H1 (cell line): ENCODE measurements at regions of chr10 and their contacts with region 1.

Region 1: DNA sequence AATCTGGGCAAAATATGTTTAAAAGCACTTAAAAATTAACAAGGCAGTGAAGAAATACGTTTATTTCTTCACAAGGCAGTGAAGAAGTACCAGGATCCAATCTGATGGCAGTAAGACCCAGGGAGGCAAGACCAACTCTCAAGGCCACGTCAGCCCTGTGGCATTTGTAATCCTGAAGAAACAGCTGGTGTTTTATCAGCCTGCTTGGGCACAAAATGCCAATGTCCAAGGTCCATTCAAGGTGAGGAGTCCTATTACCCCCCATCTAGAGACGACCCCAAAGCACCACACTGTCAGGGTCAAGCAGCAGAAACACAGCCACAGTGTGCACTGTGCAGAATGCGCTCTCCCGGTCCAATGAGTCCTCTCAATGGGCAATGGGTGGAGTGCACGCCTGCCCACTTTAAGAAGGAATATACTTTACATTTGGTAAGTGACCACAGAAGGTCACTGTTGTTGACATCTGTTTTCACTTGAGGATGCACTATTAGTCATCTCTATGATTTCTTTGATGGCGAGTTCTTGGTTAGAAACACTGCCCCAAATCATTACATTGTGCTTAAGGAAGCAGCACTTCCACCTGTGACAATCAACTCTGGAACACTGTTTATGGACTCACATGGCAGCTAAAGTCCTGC is 12.8 kb downstream of the CPXM2 start:
- DNase-seq: no peak
- H3K4me3 ChIP-seq: no peak overlapping the region
- H3K27ac ChIP-seq: no peak overlapping the region
- H3K4me1 ChIP-seq: no peaks in the 10 kb centered on the region
- H3K27me3 ChIP-seq: no peaks in the 10 kb centered on the region
- CTCF ChIP-seq: no peak
- EP300 ChIP-seq: no peak
- POLR2A ChIP-seq: no peak
- RAD21 ChIP-seq: no peak

Region 2: GRCh38 chr10:123301077-123301857 is 577.5 kb before region 1 on chr10:
- CTCF ChIA-PET with region 1: no interaction called
- POLR2A ChIA-PET with region 1: no interaction called
- DNase-seq: no peak
- H3K4me3 ChIP-seq: no peak overlapping the region
- H3K27ac ChIP-seq: no peak overlapping the region
- H3K4me1 ChIP-seq: no peaks in the 10 kb centered on the region
- H3K27me3 ChIP-seq: no peaks in the 10 kb centered on the region
- CTCF ChIP-seq: no peak
- EP300 ChIP-seq: no peak
- POLR2A ChIP-seq: no peak
- RAD21 ChIP-seq: peak; percentile 17 to 29; a peak in 2 of 4 replicates

Region 3: DNA sequence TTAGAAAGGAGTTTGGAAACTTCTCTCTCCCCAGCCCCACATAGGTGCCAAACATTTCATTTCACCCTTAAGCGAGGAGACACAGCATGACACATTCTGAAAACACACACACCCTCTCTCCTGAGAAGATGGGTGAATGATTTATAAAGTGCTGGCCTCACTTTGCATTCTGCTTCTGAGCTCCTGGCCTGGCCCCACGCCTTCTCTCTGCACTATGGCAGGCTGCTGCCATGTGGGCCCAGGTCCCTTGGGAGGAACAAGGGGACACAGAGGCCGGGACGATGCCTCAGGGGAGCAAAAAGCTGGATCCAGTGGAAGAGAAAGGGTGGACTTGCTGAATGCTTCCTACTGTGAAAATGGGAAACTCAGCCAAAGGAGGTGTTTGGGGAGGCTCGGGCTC is 43.2 kb before region 1 on chr10:
- CTCF ChIA-PET with region 1: no interaction called
- POLR2A ChIA-PET with region 1: no interaction called
- DNase-seq: no peak
- H3K4me3 ChIP-seq: no peak overlapping the region
- H3K27ac ChIP-seq: no peak overlapping the region
- H3K4me1 ChIP-seq: peaks cover 0 to 4% (median 2%) of the 10 kb centered on the region in 4 experiments; a peak in 2 of 7 replicates
- H3K27me3 ChIP-seq: no peaks in the 10 kb centered on the region
- CTCF ChIP-seq: no peak
- EP300 ChIP-seq: no peak
- POLR2A ChIP-seq: no peak
- RAD21 ChIP-seq: no peak

Region 4: GRCh38 chr10:123863721-123864482 is 14.9 kb before region 1 on chr10:
- CTCF ChIA-PET with region 1: interaction called, 17 read pairs
- POLR2A ChIA-PET with region 1: interaction called, 3 read pairs
- DNase-seq: no peak
- H3K4me3 ChIP-seq: no peak overlapping the region
- H3K27ac ChIP-seq: no peak overlapping the region
- H3K4me1 ChIP-seq: peaks cover 0 to 11% (median 3%) of the 10 kb centered on the region in 4 experiments; a peak in 6 of 7 replicates
- H3K27me3 ChIP-seq: no peaks in the 10 kb centered on the region
- CTCF ChIP-seq: peak in 1 of 3 experiments; percentile 3; a peak in 1 of 4 replicates
- EP300 ChIP-seq: no peak
- POLR2A ChIP-seq: no peak
- RAD21 ChIP-seq: peak in 1 of 2 experiments; percentile 3; a peak in 1 of 4 replicates